Heart left ventricle (tissue), 16 donors: ENCODE measurements at regions of chr1 and their contacts with region 1.

Region 1: GRCh38 chr1:110619412-110620249 is 13.5 kb upstream of the KCNA2 start:
- DNase-seq: peak; percentile 82 to 93 (median 87)
- ATAC-seq: peak; percentile 60 to 92 (median 89)
- H3K4me3 ChIP-seq: peak overlapping the region in 4 of 12 donors; percentile 14 to 50 (median 26)
- H3K27ac ChIP-seq: no peak overlapping the region
- H3K4me1 ChIP-seq: peaks cover 0 to 17% (median 7%) of the 10 kb centered on the region in 12 donors
- H3K27me3 ChIP-seq: peaks cover 0 to 44% (median 21%) of the 10 kb centered on the region in 9 donors
- CTCF ChIP-seq: peak; percentile 80 to 98 (median 94)
- POLR2A ChIP-seq: no peak

Region 2: GRCh38 chr1:110766025-110766647 is 146.5 kb after region 1 on chr1:
- intact Hi-C with region 1: loop called in 1 of 10 experiments (anchors 5 kb)
- DNase-seq: peak in 3 of 5 donors; percentile 27 to 42 (median 32)
- ATAC-seq: peak in 2 of 4 donors; percentile 53 to 65
- H3K4me3 ChIP-seq: no peak overlapping the region
- H3K27ac ChIP-seq: no peak overlapping the region
- H3K4me1 ChIP-seq: peaks cover 0 to 4% (median 0%) of the 10 kb centered on the region in 12 donors
- H3K27me3 ChIP-seq: peaks cover 0 to 24% (median 2%) of the 10 kb centered on the region in 9 donors
- CTCF ChIP-seq: peak; percentile 68 to 91 (median 84)
- POLR2A ChIP-seq: no peak

Region 3: DNA sequence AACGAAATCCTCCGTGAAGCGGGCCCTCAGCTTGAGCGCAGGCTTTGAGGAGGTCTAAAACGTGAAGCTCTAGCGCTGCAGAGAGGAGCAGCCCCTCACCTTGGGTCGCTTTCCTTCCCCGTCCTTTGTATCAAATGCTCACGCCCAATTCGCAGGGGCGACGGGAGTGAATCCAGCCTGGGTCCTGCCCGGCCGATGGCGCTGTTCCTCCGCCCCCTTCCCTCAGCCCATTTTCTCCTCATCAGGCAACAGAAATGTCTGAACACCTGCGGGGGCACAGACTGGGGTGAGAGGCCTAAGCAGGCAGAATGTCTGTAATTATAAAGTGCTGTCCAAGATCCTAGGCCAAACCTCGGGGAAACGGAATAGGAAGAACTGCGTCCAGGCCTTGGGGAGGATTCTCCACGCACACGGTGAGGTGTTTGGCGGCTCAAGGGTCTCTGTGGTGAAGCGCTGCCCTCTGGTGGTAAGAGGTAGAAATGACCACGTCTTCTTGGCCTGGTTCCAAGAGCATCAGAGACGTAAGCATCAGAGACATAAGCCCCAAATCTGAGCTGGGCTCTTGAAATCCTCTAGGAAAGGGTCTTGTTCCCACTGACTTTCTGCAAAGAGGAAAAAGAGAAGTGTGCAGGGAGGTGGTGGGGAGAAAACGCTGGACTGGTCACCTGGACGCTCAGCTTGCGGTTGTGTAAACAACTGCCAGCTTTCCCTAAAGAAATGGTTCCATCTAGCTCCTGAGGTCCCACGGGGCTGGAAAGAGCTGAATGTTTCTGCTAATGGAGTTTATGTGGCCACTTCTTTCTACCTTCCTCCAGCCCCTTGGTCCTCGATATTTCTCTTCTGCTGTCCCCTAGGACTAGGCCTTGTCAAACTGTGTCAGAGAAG is 161.2 kb after region 1 on chr1:
- intact Hi-C with region 1: loop called in 6 of 10 experiments (anchors 1 to 5 kb)
- DNase-seq: peak in 4 of 5 donors; percentile 46 to 62 (median 55)
- ATAC-seq: peak in 3 of 4 donors; percentile 47 to 72 (median 69)
- H3K4me3 ChIP-seq: no peak overlapping the region
- H3K27ac ChIP-seq: no peak overlapping the region
- H3K4me1 ChIP-seq: peaks cover 0 to 17% (median 0%) of the 10 kb centered on the region in 12 donors
- H3K27me3 ChIP-seq: peaks cover 0 to 31% (median 3%) of the 10 kb centered on the region in 9 donors
- CTCF ChIP-seq: peak; percentile 73 to 90 (median 80)
- POLR2A ChIP-seq: no peak